Sigmoid colon (tissue), 7 donors: ENCODE measurements at regions of chr5 and their contacts with region 1.

Region 1: DNA sequence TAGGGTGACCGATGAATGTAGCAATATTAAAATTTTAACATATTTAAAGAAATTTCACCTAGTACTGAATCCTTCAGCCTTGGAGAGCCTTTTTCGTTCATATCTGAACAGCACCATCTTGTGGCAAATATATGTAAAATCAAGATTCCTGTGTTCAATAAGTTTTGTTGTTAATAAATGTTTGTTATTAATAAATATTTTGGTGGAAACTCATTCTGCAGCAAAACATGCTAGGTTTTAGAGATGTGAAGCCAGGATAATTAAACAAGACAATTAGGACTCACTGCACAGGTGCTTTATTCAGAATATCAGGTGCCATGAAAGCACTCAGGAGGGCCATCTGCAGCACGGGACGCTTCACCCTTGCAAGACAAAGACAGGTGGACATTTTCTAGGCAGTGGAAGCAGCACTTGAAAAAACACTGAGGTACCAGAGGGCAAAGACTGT is 15.7 kb downstream of the TICAM2 start:
- DNase-seq: no peak
- H3K4me3 ChIP-seq: no peak overlapping the region
- H3K27ac ChIP-seq: no peak overlapping the region
- H3K4me1 ChIP-seq: peaks cover 0 to 18% (median 14%) of the 10 kb centered on the region in 4 donors
- H3K27me3 ChIP-seq: no peaks in the 10 kb centered on the region
- CTCF ChIP-seq: peak; percentile 20 to 58 (median 43)
- EP300 ChIP-seq: no peak
- POLR2A ChIP-seq: no peak

Region 2: DNA sequence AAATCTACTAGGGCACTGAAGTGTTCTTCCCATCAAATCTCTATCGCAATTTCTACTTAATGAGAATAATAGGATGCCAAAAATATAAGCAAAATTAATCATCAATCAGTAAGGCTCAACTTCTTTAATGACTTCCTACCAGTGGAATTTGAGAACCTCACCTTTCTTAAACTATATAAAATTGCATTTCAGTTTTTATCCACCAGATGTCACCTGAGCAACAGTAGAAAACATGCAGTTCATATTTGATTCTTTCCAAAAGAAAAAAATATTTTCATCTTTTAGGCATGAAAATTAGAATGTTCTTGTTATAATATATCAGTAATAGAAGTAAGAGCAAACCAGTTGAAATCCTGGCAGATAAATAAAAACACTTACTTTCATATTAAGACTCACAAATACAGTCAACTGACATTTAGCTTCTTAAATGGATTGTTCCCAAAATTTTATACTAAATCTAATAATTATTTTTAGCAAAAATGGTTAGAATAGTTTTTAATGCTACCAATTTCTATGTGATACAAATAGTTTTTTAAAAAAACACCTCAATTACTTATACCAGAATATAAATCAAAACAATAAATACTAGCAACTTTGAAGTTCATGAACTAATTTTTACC is 276.8 kb before region 1 on chr5:
- intact Hi-C with region 1: loop called (anchors 2 kb)
- DNase-seq: no peak
- H3K4me3 ChIP-seq: no peak overlapping the region
- H3K27ac ChIP-seq: no peak overlapping the region
- H3K4me1 ChIP-seq: no peaks in the 10 kb centered on the region
- H3K27me3 ChIP-seq: peaks cover 0 to 20% (median 0%) of the 10 kb centered on the region in 3 donors
- CTCF ChIP-seq: peak; percentile 23 to 61 (median 56)
- EP300 ChIP-seq: no peak
- POLR2A ChIP-seq: no peak

Region 3: DNA sequence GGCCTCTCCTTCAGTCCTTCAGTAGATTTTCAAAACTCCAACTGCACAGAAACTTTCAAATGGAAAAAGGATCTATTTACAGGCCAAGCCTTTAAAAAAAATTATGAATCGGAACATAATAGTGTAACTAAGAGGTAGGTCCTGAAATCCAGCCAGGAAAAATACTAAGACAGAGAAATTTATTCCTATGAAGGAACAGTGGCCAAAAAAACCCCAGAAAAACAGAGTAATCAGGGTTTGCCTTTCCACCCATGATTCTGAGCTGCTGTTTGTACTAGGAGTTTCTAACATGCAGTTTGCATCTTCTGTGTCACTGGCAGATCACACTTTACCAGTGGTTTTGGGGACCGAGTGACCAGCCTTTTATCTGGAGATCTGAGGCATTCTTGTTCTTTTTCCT is 132.3 kb after region 1 on chr5:
- intact Hi-C with region 1: no loop called
- DNase-seq: no peak
- H3K4me3 ChIP-seq: no peak overlapping the region
- H3K27ac ChIP-seq: peak overlapping the region in 1 of 4 donors; percentile 34
- H3K4me1 ChIP-seq: no peaks in the 10 kb centered on the region
- H3K27me3 ChIP-seq: no peaks in the 10 kb centered on the region
- CTCF ChIP-seq: no peak
- EP300 ChIP-seq: no peak
- POLR2A ChIP-seq: no peak